ENCODE measurements at regions of chr6 and their contacts with region 1.

Region 1: GRCh38 chr6:75275067-75275466 is 9.5 kb downstream of the TMEM30A start:
- DNase-seq: no peak
- H3K4me3 ChIP-seq: no peak overlapping the region
- H3K27ac ChIP-seq: no peak overlapping the region
- H3K4me1 ChIP-seq: no peaks in the 10 kb centered on the region
- H3K27me3 ChIP-seq: no peaks in the 10 kb centered on the region
- CTCF ChIP-seq: no peak
- POLR2A ChIP-seq: no peak

Region 2: GRCh38 chr6:74249658-74250057 is 1025.4 kb before region 1 on chr6:
- intact Hi-C with region 1: no loop called
- DNase-seq: no peak
- H3K4me3 ChIP-seq: no peak overlapping the region
- H3K27ac ChIP-seq: no peak overlapping the region
- H3K4me1 ChIP-seq: no peaks in the 10 kb centered on the region
- H3K27me3 ChIP-seq: no peaks in the 10 kb centered on the region
- CTCF ChIP-seq: no peak
- POLR2A ChIP-seq: no peak

Region 3: DNA sequence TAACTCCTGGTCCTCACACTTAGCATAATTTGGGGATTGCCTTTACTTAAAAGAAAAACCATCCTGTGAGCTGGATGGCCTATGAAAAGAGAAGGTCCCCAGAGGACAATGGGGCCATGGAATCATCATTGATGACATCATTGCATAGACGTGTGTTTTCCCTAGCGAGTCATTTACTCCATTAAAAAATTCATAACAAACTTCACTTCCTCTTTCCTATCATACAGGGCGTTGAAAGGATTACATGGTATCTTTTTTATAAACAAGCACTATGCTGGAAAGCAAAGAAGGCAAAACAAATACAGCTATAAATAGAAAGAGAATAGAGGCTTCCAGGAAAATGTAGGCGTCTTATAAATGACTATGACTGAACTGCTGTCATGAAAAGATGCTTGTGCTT is 57.9 kb before region 1 on chr6:
- intact Hi-C with region 1: no loop called
- DNase-seq: no peak
- H3K4me3 ChIP-seq: no peak overlapping the region
- H3K27ac ChIP-seq: peak overlapping the region in 1 of 2 donors; percentile 3
- H3K4me1 ChIP-seq: peaks cover 0 to 5% of the 10 kb centered on the region in 2 donors
- H3K27me3 ChIP-seq: no peaks in the 10 kb centered on the region
- CTCF ChIP-seq: no peak
- POLR2A ChIP-seq: no peak

Region 4: DNA sequence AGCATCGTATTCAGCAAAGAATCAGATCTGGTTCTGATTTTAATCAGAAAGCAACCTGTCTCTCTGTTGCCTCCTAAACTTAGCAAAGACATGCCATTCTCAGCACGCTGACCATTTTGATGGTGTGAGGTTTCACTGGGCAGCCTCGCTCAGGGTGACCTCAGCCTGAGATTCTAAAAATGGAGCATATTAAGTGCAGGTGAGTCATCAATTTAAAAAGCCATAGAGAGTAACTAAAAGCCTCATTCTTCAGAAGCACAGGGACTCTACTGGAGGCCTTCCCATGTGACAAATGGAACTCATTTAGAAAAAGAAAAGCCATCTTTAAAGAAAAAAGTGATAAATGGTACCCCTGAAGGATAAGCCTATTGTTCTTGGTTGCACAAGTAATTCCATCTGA is 127.2 kb after region 1 on chr6:
- intact Hi-C with region 1: no loop called
- DNase-seq: peak; percentile 36 to 58
- H3K4me3 ChIP-seq: no peak overlapping the region
- H3K27ac ChIP-seq: peak overlapping the region; percentile 48 to 52
- H3K4me1 ChIP-seq: no peaks in the 10 kb centered on the region
- H3K27me3 ChIP-seq: no peaks in the 10 kb centered on the region
- CTCF ChIP-seq: no peak
- POLR2A ChIP-seq: no peak

Region 5: GRCh38 chr6:75449716-75450115 is 174.6 kb after region 1 on chr6:
- intact Hi-C with region 1: no loop called
- DNase-seq: no peak
- H3K4me3 ChIP-seq: no peak overlapping the region
- H3K27ac ChIP-seq: no peak overlapping the region
- H3K4me1 ChIP-seq: no peaks in the 10 kb centered on the region
- H3K27me3 ChIP-seq: no peaks in the 10 kb centered on the region
- CTCF ChIP-seq: no peak
- POLR2A ChIP-seq: no peak

Region 6: GRCh38 chr6:75526502-75527127 is 251.5 kb after region 1 on chr6:
- intact Hi-C with region 1: loop called (anchors 10 kb)
- DNase-seq: peak; percentile 45 to 72
- H3K4me3 ChIP-seq: no peak overlapping the region
- H3K27ac ChIP-seq: no peak overlapping the region
- H3K4me1 ChIP-seq: no peaks in the 10 kb centered on the region
- H3K27me3 ChIP-seq: no peaks in the 10 kb centered on the region
- CTCF ChIP-seq: peak; percentile 69 to 89 (median 80)
- POLR2A ChIP-seq: no peak

Measured in uterus (tissue), 4 donors.